Pancreas (tissue), 10 donors: ENCODE measurements at regions of chr17 and their contacts with region 1.

Region 1: GRCh38 chr17:41579484-41580243 is 7.0 kb downstream of the KRT14 start:
- DNase-seq: peak; percentile 77 to 91 (median 88)
- ATAC-seq: peak; percentile 96 to 100 (median 97)
- H3K4me3 ChIP-seq: no peak overlapping the region
- H3K27ac ChIP-seq: no peak overlapping the region
- H3K4me1 ChIP-seq: no peaks in the 10 kb centered on the region
- H3K27me3 ChIP-seq: no peaks in the 10 kb centered on the region
- CTCF ChIP-seq: peak; percentile 70 to 86 (median 78)

Region 2: DNA sequence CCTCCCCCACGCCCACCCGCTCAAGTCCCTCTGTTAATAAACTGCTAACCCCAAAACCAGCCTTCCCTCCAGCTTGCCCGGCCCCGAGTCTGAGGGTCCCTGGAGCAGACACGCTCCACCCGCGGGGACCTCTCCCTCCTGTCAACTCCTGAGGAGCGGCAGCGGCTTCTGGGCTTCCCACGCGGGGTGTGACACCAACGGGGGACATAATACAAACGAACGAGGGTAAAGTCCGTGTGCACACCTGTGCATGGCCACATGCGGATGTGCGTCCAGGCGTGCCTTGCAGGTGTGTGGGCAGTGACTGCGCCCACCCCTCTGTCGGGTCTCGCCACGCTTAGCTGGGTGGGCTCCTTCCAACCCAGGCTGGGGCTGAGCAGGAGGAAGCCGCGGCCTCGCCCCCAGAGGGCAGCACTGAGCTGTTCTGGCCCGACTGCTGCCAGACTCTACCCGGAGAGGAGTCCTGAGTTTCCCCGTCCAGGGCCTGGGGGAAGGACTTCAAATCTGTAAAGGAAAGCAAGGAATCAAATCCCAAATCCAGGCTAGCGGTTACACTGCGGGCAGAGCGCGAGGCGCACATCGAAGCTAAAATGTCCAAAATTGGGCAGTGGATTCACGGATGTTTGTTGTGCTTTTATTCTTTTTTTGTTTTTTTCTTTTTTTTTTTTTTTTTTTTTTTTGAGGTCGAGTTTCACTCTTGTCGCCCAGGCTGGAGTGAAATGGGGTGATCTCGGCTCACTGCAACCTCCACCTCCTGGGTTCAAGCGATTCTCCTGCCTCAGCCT is 68.9 kb after region 1 on chr17:
- intact Hi-C with region 1: loop called in 1 of 3 experiments (anchors 10 kb)
- DNase-seq: peak; percentile 80 to 97 (median 88)
- ATAC-seq: peak; percentile 89 to 95 (median 92)
- H3K4me3 ChIP-seq: peak overlapping the region in 2 of 4 donors; percentile 27 to 47
- H3K27ac ChIP-seq: no peak overlapping the region
- H3K4me1 ChIP-seq: peaks cover 0 to 6% (median 0%) of the 10 kb centered on the region in 3 donors
- H3K27me3 ChIP-seq: no peaks in the 10 kb centered on the region
- CTCF ChIP-seq: peak; percentile 82 to 95 (median 92)